ENCODE measurements at regions of chr16 and their contacts with region 1.

Region 1: GRCh38 chr16:3123986-3124886 is 10.6 kb upstream of the ZNF213 start:
- DNase-seq: peak; percentile 88
- ATAC-seq: peak; percentile 92
- H3K4me3 ChIP-seq: peak overlapping the region; percentile 73
- H3K27ac ChIP-seq: peak overlapping the region; percentile 11; the same call in 1 of the 2 replicates
- H3K4me1 ChIP-seq: no peaks in the 10 kb centered on the region; the same call in 1 of the 2 replicates
- H3K27me3 ChIP-seq: no peaks in the 10 kb centered on the region
- CTCF ChIP-seq: 0 out of 2 replicates have a peak, but pooled peaks have one; percentile 8

Region 2: GRCh38 chr16:3059000-3059722 is 65.1 kb before region 1 on chr16:
- CTCF ChIA-PET with region 1: no interaction called
- POLR2A ChIA-PET with region 1: no interaction called
- intact Hi-C with region 1: loop called (anchors 1 kb)
- DNase-seq: peak; percentile 83
- ATAC-seq: peak; percentile 91
- H3K4me3 ChIP-seq: peak overlapping the region; percentile 86
- H3K27ac ChIP-seq: no peak overlapping the region
- H3K4me1 ChIP-seq: no peaks in the 10 kb centered on the region
- H3K27me3 ChIP-seq: no peaks in the 10 kb centered on the region
- CTCF ChIP-seq: peak; percentile 62

Measured in PC-3 (cell line).